ENCODE measurements at regions of chr1 and their contacts with region 1.

Region 1: GRCh38 chr1:147627435-147628110 is 42.8 kb downstream of the ACP6 start:
- DNase-seq: peak in 2 of 4 donors; percentile 44 to 48
- ATAC-seq: peak; percentile 90
- H3K4me3 ChIP-seq: no peak overlapping the region
- H3K27ac ChIP-seq: peak overlapping the region in 1 of 2 donors; percentile 80
- H3K4me1 ChIP-seq: peaks cover 0 to 22% of the 10 kb centered on the region in 2 donors
- H3K27me3 ChIP-seq: no peaks in the 10 kb centered on the region
- CTCF ChIP-seq: peak; percentile 91 to 93

Region 2: GRCh38 chr1:147494998-147495580 is 132.5 kb before region 1 on chr1:
- intact Hi-C with region 1: loop called (anchors 5 to 10 kb)
- DNase-seq: peak in 2 of 4 donors; percentile 60 to 84
- ATAC-seq: peak; percentile 97
- H3K4me3 ChIP-seq: no peak overlapping the region
- H3K27ac ChIP-seq: no peak overlapping the region
- H3K4me1 ChIP-seq: peaks cover 0 to 4% of the 10 kb centered on the region in 2 donors
- H3K27me3 ChIP-seq: no peaks in the 10 kb centered on the region
- CTCF ChIP-seq: peak; percentile 84 to 89

Region 3: DNA sequence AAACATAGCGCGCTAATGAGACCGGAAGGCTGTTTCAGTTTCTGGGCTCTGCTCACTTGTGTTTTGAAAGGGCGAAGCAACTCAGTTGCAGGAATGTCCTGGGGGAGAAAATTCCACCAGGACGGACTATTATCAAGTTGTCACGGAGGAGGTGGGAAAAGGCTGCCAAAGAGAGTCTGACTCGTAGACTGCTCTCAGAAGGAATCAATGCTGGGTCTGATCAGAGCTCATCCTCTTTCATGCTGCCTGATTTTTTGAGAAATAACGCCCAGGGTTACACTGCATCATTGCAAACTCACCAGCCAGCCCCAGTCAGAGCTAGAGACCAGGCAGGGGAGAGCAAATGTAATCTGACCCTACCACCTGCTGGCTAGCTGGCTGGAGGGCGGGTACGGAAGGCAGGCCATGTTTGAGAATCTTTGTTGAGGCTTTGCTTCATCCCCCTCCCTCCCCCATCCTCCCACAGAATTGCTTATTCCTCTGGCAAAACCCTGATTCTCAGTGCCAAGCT is 122.7 kb before region 1 on chr1:
- intact Hi-C with region 1: loop called in 1 of 2 experiments (anchors 10 kb)
- DNase-seq: peak in 2 of 4 donors; percentile 23 to 41
- ATAC-seq: peak; percentile 48
- H3K4me3 ChIP-seq: no peak overlapping the region
- H3K27ac ChIP-seq: no peak overlapping the region
- H3K4me1 ChIP-seq: no peaks in the 10 kb centered on the region
- H3K27me3 ChIP-seq: no peaks in the 10 kb centered on the region
- CTCF ChIP-seq: no peak

Region 4: GRCh38 chr1:147545133-147545532 is 82.4 kb before region 1 on chr1:
- intact Hi-C with region 1: no loop called
- DNase-seq: peak in 3 of 4 donors; percentile 60 to 83 (median 79)
- ATAC-seq: peak; percentile 63
- H3K4me3 ChIP-seq: no peak overlapping the region
- H3K27ac ChIP-seq: no peak overlapping the region
- H3K4me1 ChIP-seq: peaks cover 17% of the 10 kb centered on the region in 2 donors
- H3K27me3 ChIP-seq: peaks cover 0 to 12% of the 10 kb centered on the region in 2 donors
- CTCF ChIP-seq: no peak

Measured in left lung (tissue), 14 donors.